Heart left ventricle (tissue), 16 donors: ENCODE measurements at regions of chr7 and their contacts with region 1.

Region 1: DNA sequence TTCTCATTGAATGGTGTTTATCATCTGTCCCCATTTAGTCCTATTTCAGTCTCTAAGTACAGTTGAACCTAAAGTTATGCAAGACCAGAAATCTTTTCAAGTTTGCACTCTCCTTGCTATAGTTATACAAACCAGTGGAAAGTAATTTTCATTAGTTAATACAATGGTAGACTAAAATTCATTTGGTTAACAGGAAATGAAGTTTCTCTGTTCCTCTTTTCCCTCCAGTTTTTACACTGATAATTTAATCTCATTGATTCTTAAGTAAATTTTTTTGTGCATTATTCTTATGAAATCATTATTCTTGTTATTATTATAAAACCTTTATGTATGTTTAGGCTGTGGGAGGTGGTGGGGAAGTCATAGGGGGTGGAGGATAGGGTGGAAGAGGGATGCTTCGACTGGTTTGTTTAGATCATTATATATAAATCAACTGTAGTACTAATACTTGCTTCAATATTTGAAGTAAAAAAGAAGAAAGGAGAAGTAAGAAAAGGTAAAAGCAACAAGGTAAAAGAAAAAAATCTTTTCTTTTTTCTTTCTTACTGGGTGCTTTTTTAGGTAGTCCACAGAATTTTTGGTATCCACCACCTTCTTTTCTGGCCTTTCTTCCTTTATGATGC is 104.1 kb downstream of the GPR85 start:
- DNase-seq: no peak
- ATAC-seq: no peak
- H3K4me3 ChIP-seq: no peak overlapping the region
- H3K27ac ChIP-seq: peak overlapping the region in 8 of 12 donors; percentile 15 to 93 (median 66)
- H3K4me1 ChIP-seq: peaks cover 0 to 14% (median 7%) of the 10 kb centered on the region in 12 donors
- H3K27me3 ChIP-seq: no peaks in the 10 kb centered on the region
- CTCF ChIP-seq: no peak
- POLR2A ChIP-seq: no peak

Region 2: DNA sequence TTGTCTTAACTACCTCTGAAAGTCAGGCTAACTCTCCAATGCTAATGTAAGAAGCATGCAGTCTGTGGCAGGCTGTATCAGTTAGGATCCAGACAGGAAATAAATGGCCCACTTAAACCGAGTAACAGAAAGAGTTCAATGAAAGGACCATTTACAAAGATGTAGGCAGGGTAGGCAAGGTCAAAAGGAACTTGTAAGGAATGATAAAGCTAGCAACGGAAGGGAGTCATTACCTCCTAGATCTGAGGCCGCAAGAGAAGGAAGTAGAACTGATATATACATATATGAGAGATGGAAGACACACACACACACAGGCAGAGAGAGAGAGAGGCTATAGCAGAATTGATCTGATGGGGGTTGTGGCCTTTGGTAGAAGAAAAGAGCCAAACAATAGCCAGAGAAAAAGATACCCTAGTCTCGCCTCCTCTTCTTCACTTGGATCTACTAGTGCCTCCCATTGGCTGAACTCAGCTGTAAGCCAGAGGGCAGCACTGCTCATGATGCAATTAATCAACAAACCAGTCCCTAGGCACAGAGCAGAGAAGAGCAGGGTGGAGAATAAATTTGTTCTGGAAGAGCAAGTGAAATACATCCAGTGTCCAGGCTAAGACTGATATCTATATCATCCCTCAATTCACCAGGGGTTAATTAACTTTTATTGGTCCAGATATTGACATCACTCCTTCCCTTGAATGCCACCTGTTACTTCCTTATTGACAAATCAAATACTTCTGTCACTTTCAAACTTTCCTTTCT is 410.5 kb before region 1 on chr7:
- intact Hi-C with region 1: loop called in 1 of 10 experiments (anchors 10 kb)
- DNase-seq: no peak
- ATAC-seq: peak in 3 of 4 donors; percentile 43 to 60 (median 52)
- H3K4me3 ChIP-seq: no peak overlapping the region
- H3K27ac ChIP-seq: peak overlapping the region in 9 of 12 donors; percentile 5 to 77 (median 67)
- H3K4me1 ChIP-seq: peaks cover 0 to 33% (median 13%) of the 10 kb centered on the region in 12 donors
- H3K27me3 ChIP-seq: no peaks in the 10 kb centered on the region
- CTCF ChIP-seq: peak in 3 of 12 donors; percentile 24 to 32 (median 30)
- POLR2A ChIP-seq: no peak

Region 3: DNA sequence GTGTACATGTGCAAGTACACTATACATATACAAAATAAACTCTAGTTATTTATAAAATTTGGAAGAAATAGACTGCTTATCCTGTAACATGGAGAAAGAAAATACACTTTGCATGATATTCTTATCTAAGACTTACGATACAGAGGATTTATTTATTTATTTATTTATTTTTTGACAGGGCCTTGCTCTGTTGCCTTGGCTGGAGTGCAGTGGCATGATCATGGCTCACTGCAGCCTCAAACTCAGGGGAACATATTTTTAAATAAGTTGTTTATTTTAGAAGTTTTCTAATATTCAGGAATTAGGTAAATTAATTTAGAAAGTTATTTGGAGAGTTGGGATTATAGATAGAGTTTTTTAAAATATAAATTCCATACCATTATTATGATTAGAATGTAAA is 12.6 kb before region 1 on chr7:
- intact Hi-C with region 1: loop called in 1 of 10 experiments (anchors 2 kb)
- DNase-seq: no peak
- ATAC-seq: peak in 2 of 4 donors; percentile 34 to 54
- H3K4me3 ChIP-seq: no peak overlapping the region
- H3K27ac ChIP-seq: peak overlapping the region in 5 of 12 donors; percentile 6 to 44 (median 9)
- H3K4me1 ChIP-seq: peaks cover 0 to 16% (median 0%) of the 10 kb centered on the region in 12 donors
- H3K27me3 ChIP-seq: no peaks in the 10 kb centered on the region
- CTCF ChIP-seq: no peak
- POLR2A ChIP-seq: no peak

Region 4: DNA sequence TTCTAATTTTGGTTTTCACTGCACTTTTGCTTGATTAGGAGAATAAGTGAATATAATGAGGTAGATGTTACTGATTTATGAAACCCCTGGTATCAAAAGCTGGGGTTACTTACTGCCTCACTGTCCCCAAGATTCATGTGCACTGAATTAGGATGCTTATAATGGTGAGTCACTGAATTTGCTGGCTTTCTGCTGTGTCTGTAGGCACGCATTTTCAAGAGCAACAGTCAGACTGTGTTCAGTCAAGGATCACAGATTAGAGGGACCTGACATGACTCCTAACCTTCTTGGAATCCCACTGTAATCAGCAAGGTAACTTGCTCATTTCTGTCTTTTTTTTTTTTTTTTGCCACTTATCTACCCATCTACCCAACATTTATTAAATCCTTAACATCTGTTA is 44.4 kb after region 1 on chr7:
- intact Hi-C with region 1: no loop called
- DNase-seq: no peak
- ATAC-seq: no peak
- H3K4me3 ChIP-seq: no peak overlapping the region
- H3K27ac ChIP-seq: no peak overlapping the region
- H3K4me1 ChIP-seq: peaks cover 0 to 5% (median 0%) of the 10 kb centered on the region in 12 donors
- H3K27me3 ChIP-seq: no peaks in the 10 kb centered on the region
- CTCF ChIP-seq: no peak
- POLR2A ChIP-seq: no peak